AG04449 (cell line): ENCODE measurements at regions of chr13 and their contacts with region 1.

Region 1: DNA sequence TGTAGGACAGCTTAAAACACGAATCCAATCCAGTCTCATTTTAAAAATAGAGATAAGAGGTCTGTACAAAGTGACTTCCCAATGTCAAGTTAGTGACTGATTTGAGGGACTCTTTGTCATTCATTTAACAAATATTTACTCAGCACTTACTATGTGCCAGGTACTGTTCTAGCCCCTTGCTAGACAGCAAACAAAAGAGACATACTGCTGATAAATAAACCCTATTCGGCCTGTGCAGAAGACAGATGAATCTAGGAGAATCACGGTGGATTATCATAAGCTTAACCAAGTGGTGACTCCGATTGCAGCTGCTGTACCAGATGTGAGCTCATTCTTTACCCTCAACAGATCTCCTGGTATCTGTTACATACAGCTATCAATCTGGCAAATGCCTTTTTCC is 6.4 kb upstream of the ELF1 start:
- DNase-seq: no peak
- H3K4me3 ChIP-seq: no peak overlapping the region
- CTCF ChIP-seq: no peak

Region 2: DNA sequence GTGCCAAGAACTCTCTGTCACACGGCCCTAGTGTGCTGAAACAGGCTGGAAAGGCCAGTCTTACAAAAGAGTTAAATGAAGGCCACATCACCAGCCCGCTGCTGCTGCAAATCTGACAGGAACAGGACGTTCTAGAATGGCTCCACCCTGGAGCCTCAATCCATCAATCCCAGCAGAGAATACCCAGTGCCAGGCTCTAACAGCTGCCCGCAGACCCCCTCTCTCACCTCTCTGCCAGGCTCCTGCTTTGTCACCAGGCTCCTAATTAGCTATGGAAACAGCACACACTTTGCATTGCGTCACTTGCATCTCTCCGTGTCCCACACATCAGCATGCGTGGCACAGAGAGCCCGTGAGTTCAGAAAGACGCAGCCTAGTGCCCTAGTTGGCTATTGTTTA is 673.1 kb before region 1 on chr13:
- CTCF ChIA-PET with region 1: no interaction called
- POLR2A ChIA-PET with region 1: no interaction called
- DNase-seq: no peak
- H3K4me3 ChIP-seq: no peak overlapping the region
- CTCF ChIP-seq: no peak

Region 3: GRCh38 chr13:41054212-41054877 is 28.8 kb after region 1 on chr13:
- CTCF ChIA-PET with region 1: interaction called, 15 read pairs
- POLR2A ChIA-PET with region 1: no interaction called
- DNase-seq: no peak
- H3K4me3 ChIP-seq: no peak overlapping the region
- CTCF ChIP-seq: peak; percentile 45